Activated CD4-positive, alpha-beta T cell treated with anti-CD3 and anti-CD28 coated beads, Interleukin-2, amount 10 ng/mL, durations not matched to agents 24 days and 14 days (primary cell): ENCODE measurements at regions of chr11 and their contacts with region 1.

Region 1: DNA sequence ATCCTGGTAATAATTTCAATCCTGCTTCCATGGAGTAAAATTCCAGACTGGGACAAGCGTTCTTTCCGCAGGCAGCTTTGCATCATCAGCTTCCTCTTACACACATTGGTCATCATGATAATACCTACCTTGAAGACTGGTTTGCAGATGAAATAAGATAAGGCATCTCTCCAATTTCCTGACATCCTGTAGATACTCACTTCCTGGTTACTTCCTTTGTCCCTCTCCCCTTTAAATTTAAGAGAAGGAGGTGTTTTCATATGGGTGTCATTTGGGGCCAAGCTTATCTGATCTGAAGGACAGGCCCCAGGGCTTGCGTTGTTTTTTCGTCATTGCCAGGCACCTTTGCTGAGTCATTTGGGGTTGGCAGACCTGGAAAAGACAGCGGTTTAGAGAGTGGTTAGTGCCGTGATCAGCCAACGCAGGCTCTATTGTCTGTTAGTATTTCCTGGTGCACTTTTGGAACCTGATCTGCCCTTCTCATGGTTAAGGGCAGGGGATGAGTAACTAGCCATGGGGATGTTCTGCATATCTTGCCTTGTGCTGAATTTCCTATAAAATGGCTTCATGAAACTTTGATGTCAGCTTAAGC is 24.1 kb downstream of the GRAMD1B start:
- DNase-seq: peak; percentile 91
- H3K4me3 Mint-ChIP-seq: peak overlapping the region; percentile 82
- H3K27ac Mint-ChIP-seq: peak overlapping the region; percentile 94
- H3K4me1 Mint-ChIP-seq: peaks cover 79% of the 10 kb centered on the region
- H3K27me3 Mint-ChIP-seq: no peaks in the 10 kb centered on the region

Region 2: DNA sequence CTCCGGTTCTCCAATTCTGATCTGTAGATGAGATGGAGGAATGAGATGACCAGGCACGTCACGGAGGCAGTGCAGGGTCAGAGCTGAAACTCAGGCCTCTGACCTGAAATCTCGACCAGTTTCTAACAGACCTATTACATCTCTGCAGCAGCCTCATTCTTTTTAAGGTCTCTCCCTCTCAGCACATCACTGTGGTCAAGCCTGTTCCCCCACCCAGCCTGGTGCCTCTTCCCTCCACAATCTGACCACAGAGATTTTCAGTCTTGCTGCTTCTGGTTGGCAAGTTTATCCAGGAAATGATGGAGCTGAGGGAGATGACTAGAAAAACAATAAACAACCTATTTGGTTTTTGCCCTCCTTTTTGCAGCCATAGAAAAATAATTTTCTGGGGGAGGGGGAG is 14.5 kb before region 1 on chr11:
- intact Hi-C with region 1: loop called (anchors 1 kb)
- DNase-seq: peak; percentile 71
- H3K4me3 Mint-ChIP-seq: peak overlapping the region; percentile 75
- H3K27ac Mint-ChIP-seq: peak overlapping the region; percentile 83
- H3K4me1 Mint-ChIP-seq: peaks cover 71% of the 10 kb centered on the region
- H3K27me3 Mint-ChIP-seq: no peaks in the 10 kb centered on the region